HCT116 (cell line): ENCODE measurements at regions of chr4 and their contacts with region 1.

Region 1: GRCh38 chr4:121736735-121737351 is 28.1 kb downstream of the SMIM43 start:
- DNase-seq: peak; percentile 54
- ATAC-seq: peak; percentile 90
- H3K4me3 ChIP-seq: no peak overlapping the region
- H3K27ac ChIP-seq: no peak overlapping the region
- H3K4me1 ChIP-seq: no peaks in the 10 kb centered on the region
- H3K27me3 ChIP-seq: no peaks in the 10 kb centered on the region
- CTCF ChIP-seq: peak; percentile 61 to 76 (median 61)
- POLR2A ChIP-seq: no peak
- RAD21 ChIP-seq: peak; percentile 84

Region 2: DNA sequence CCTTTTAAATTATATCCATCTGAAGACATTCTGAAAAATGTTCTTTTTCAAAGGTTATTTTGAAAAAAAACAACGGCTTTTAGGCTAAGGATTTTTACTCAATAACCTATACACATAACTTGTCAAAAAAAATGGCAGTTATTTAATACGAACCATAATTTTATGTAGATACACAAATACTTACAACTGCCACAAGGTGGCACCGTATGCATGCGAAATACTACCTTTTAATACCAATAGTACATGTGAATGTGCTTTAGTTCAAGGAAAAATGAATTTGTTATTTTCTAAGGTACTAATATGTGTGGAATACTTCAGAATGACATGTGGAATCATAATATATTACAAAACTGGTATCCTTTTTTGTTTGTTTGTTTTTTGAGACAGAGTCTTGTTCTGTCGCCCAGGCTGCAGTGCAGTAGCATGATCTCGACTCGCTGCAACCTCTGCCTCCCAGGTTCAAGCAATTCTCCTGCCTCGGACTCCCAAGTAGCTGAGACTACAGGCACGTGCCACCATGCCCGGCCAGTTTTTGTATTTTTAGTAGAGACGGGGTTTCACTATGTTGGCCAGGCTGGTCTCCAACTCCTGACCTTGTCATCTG is 1665.5 kb before region 1 on chr4:
- CTCF ChIA-PET with region 1: no interaction called
- POLR2A ChIA-PET with region 1: no interaction called
- RAD21 ChIA-PET with region 1: no interaction called
- intact Hi-C with region 1: loop called (anchors 5 kb)
- DNase-seq: peak; percentile 57
- ATAC-seq: no peak
- H3K4me3 ChIP-seq: no peak overlapping the region
- H3K27ac ChIP-seq: no peak overlapping the region
- H3K4me1 ChIP-seq: peaks cover 2 to 8% of the 10 kb centered on the region in 2 experiments; a peak in 2 of 4 replicates
- H3K27me3 ChIP-seq: no peaks in the 10 kb centered on the region
- CTCF ChIP-seq: peak; percentile 38 to 70 (median 48); a peak in 4 of 6 replicates
- POLR2A ChIP-seq: no peak
- RAD21 ChIP-seq: peak; percentile 79

Region 3: DNA sequence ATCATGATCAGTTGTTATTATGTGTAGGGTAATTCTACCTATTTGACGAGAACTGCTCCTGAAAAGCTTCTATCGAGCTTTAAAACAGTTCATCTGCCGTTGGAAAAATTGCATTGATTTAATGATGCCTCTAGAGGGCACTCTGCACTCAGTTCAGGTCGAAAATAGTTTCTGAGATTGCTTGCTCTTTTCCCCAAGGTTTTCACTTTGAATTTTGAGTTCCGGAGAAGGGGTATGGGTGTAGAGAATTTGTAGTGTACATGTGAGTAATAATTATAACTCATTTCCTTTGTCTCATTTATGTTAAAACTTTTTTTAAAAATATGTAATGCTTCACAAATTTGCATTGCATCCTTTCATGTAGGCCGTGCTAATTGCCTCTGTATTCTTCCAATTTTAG is 544.4 kb before region 1 on chr4:
- CTCF ChIA-PET with region 1: interaction called, 6 read pairs
- POLR2A ChIA-PET with region 1: no interaction called
- RAD21 ChIA-PET with region 1: no interaction called
- intact Hi-C with region 1: loop called (anchors 2 kb)
- DNase-seq: peak; percentile 33
- ATAC-seq: peak; percentile 70
- H3K4me3 ChIP-seq: no peak overlapping the region
- H3K27ac ChIP-seq: no peak overlapping the region
- H3K4me1 ChIP-seq: peaks cover 0 to 3% of the 10 kb centered on the region in 2 experiments; a peak in 1 of 4 replicates
- H3K27me3 ChIP-seq: no peaks in the 10 kb centered on the region
- CTCF ChIP-seq: peak; percentile 66 to 78 (median 68)
- POLR2A ChIP-seq: no peak
- RAD21 ChIP-seq: peak; percentile 76

Region 4: DNA sequence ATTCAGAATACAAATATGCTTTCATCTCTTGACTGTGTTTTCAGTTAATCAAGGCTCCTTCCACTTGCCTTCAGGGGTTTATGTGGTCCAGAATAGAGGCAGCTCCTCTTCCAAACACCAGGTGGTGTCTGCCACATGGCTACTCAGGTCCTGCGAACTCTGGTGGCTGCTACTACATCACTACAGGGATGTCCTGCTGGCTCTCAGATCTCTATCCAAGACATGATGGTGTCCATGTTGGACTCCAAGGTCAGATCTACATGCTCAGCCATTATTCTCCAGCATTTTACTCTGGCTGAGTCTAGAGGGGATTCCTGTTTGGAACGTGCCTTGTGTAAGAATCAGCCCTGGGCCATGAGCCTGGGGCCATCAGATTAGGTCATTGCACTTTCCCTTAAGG is 459.2 kb before region 1 on chr4:
- CTCF ChIA-PET with region 1: no interaction called
- POLR2A ChIA-PET with region 1: no interaction called
- RAD21 ChIA-PET with region 1: no interaction called
- intact Hi-C with region 1: loop called (anchors 1 kb)
- DNase-seq: peak; percentile 42
- ATAC-seq: peak; percentile 98
- H3K4me3 ChIP-seq: no peak overlapping the region
- H3K27ac ChIP-seq: no peak overlapping the region
- H3K4me1 ChIP-seq: 0 out of 4 replicates have a peak, but pooled peaks cover 0 to 2% of the 10 kb centered on the region in 2 experiments
- H3K27me3 ChIP-seq: no peaks in the 10 kb centered on the region
- CTCF ChIP-seq: peak; percentile 69 to 96 (median 78)
- POLR2A ChIP-seq: no peak
- RAD21 ChIP-seq: peak; percentile 53

Region 5: DNA sequence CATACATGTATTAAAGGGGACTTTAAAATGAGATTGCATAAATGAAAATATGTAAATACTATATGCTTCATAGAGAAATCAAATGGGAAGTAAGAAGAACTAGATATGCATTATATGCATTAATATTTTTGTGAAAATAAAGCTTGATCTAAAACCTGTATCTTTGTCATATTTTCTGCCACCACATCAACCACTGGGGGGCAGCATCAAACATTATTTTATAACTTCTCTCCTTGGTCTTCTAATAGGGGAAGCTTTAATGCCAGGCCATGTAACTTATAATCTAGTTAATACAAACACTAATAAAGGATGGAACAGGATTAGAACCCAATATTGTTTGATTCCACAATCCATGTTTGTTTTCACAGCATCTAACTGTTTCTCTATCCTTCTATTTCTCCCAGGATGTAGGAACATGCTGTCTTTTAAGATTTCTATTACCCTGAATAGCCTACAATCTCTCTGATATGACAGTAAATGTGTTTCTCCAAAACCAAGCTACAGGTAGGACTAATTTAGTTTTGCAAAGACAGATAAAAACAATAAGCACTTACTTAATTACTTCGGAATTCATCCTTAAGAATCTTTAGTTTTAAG is 366.0 kb before region 1 on chr4:
- CTCF ChIA-PET with region 1: interaction called, 13 read pairs
- POLR2A ChIA-PET with region 1: no interaction called
- RAD21 ChIA-PET with region 1: no interaction called
- intact Hi-C with region 1: loop called (anchors 5 kb)
- DNase-seq: peak; percentile 40
- ATAC-seq: peak; percentile 74
- H3K4me3 ChIP-seq: no peak overlapping the region
- H3K27ac ChIP-seq: no peak overlapping the region
- H3K4me1 ChIP-seq: peaks cover under 1 to 10% of the 10 kb centered on the region in 2 experiments; a peak in 3 of 4 replicates
- H3K27me3 ChIP-seq: no peaks in the 10 kb centered on the region
- CTCF ChIP-seq: peak; percentile 55 to 82 (median 64); a peak in 5 of 6 replicates
- POLR2A ChIP-seq: no peak
- RAD21 ChIP-seq: peak; percentile 71

Region 6: GRCh38 chr4:121462660-121463261 is 274.1 kb before region 1 on chr4:
- CTCF ChIA-PET with region 1: interaction called, 8 read pairs
- POLR2A ChIA-PET with region 1: no interaction called
- RAD21 ChIA-PET with region 1: interaction called, 3 to 4 read pairs
- intact Hi-C with region 1: loop called (anchors 5 kb)
- DNase-seq: peak; percentile 69
- ATAC-seq: peak; percentile 92
- H3K4me3 ChIP-seq: no peak overlapping the region
- H3K27ac ChIP-seq: no peak overlapping the region
- H3K4me1 ChIP-seq: peaks cover 0 to 6% of the 10 kb centered on the region in 2 experiments; a peak in 1 of 4 replicates
- H3K27me3 ChIP-seq: no peaks in the 10 kb centered on the region
- CTCF ChIP-seq: peak; percentile 71 to 86 (median 84); a peak in 5 of 6 replicates
- POLR2A ChIP-seq: no peak
- RAD21 ChIP-seq: peak; percentile 66

Region 7: DNA sequence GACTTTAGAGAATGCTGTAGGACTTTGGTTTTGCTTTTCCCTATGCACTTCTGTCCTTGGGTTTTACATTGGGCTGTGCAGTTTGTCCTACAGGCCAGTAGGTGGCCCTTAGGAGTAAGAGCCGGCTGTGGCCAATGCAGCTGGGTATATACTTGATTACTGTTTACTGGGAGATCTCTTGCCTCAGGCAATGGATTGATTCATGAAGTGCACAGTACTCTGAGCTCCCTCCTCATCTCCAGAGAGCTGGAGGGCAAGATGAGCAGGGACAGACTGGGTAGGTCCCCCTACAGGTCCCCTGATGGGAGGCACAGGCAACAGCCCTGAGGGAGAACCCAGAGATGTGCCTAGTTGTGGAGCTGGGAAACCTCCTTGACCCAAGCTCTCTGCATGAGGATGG is 252.2 kb before region 1 on chr4:
- CTCF ChIA-PET with region 1: interaction called, 4 read pairs
- POLR2A ChIA-PET with region 1: no interaction called
- RAD21 ChIA-PET with region 1: no interaction called
- intact Hi-C with region 1: loop called (anchors 2 kb)
- DNase-seq: peak; percentile 29
- ATAC-seq: peak; percentile 95
- H3K4me3 ChIP-seq: no peak overlapping the region
- H3K27ac ChIP-seq: no peak overlapping the region
- H3K4me1 ChIP-seq: peaks cover 0 to 6% of the 10 kb centered on the region in 2 experiments; a peak in 1 of 4 replicates
- H3K27me3 ChIP-seq: no peaks in the 10 kb centered on the region
- CTCF ChIP-seq: peak; percentile 43 to 84 (median 82); a peak in 5 of 6 replicates
- POLR2A ChIP-seq: no peak
- RAD21 ChIP-seq: peak; percentile 49

Region 8: GRCh38 chr4:122003335-122003734 is 266.5 kb after region 1 on chr4:
- CTCF ChIA-PET with region 1: no interaction called
- POLR2A ChIA-PET with region 1: no interaction called
- RAD21 ChIA-PET with region 1: no interaction called
- intact Hi-C with region 1: no loop called
- DNase-seq: peak; percentile 42
- ATAC-seq: peak; percentile 96
- H3K4me3 ChIP-seq: no peak overlapping the region
- H3K27ac ChIP-seq: no peak overlapping the region
- H3K4me1 ChIP-seq: no peaks in the 10 kb centered on the region
- H3K27me3 ChIP-seq: no peaks in the 10 kb centered on the region
- CTCF ChIP-seq: peak; percentile 23 to 57 (median 51); a peak in 4 of 6 replicates
- POLR2A ChIP-seq: no peak
- RAD21 ChIP-seq: peak; percentile 48